ENCODE measurements at regions of chr5 and their contacts with region 1.

Region 1: DNA sequence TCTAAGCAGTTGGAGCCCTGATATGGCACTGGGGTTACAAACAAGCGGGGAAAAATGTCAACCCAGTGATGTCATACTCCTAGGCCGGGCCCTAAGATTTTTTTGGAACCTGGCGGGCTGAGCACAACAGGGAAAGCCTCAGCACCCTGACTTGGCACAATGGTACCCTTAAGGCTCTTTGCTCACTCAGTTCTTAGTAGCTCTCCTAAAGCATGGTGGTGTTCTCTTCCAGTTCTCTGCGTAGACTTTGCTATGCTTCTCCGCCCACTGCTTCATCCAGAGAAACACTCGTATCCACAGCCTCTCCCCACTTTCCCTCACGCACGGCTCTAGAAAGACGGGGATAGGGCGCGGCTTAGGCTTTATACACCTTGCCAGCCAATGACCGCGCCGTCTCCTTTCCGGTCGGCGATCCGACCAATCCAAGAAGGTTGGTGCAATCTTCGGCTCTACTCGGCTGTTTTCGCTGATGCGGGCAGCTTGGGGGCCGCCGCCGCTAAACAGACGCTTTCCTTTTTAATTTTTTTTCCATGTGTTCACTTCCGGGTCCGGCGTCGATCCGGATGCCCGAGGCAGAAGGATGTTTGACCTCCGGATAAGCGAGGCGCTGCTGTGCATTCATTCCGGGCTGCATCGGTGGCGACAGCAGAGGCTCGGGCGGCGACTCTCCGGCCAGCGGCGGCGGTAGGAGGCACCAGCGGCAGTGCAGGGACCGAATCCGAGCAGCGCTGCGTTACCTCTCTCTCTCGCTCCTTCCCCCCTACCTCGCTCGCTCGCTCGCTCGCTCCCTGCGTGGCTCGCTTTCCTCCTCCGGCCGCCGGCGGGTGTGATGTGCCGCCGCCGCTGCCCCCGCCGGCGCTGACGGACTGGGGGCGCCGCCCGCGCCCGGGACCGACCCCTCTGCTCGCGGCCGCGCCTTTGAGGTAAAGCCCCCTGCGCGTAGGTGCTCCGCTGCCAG is at the start of gene CSNK1G3:
- DNase-seq: peak; percentile 77 to 97 (median 85)
- ATAC-seq: peak; percentile 85
- H3K4me3 ChIP-seq: peak within 1 kb of the TSS; percentile 83
- H3K4me3 Mint-ChIP-seq: peak within 1 kb of the TSS; percentile 96
- H3K27ac ChIP-seq: peak within 1 kb of the TSS; percentile 63 to 66
- H3K27ac Mint-ChIP-seq: peak within 1 kb of the TSS; percentile 95
- H3K4me1 ChIP-seq: peaks cover 10% of the 10 kb centered on the region
- H3K4me1 Mint-ChIP-seq: peaks cover 45% of the 10 kb centered on the region
- H3K27me3 ChIP-seq: no peaks in the 10 kb centered on the region
- H3K27me3 Mint-ChIP-seq: no peaks in the 10 kb centered on the region
- CTCF ChIP-seq: no peak
- total RNA-seq, gene CSNK1G3: 87.2 to 92.3 TPM

Region 2: GRCh38 chr5:122366501-122366900 is 1145.4 kb before region 1 on chr5:
- CTCF ChIA-PET with region 1: no interaction called
- POLR2A ChIA-PET with region 1: no interaction called
- intact Hi-C with region 1: no loop called
- DNase-seq: no peak
- ATAC-seq: no peak
- H3K4me3 ChIP-seq: no peak overlapping the region
- H3K4me3 Mint-ChIP-seq: no peak overlapping the region
- H3K27ac ChIP-seq: no peak overlapping the region
- H3K27ac Mint-ChIP-seq: no peak overlapping the region
- H3K4me1 ChIP-seq: no peaks in the 10 kb centered on the region
- H3K4me1 Mint-ChIP-seq: no peaks in the 10 kb centered on the region
- H3K27me3 ChIP-seq: no peaks in the 10 kb centered on the region
- H3K27me3 Mint-ChIP-seq: peaks cover 10% of the 10 kb centered on the region
- CTCF ChIP-seq: no peak

Region 3: DNA sequence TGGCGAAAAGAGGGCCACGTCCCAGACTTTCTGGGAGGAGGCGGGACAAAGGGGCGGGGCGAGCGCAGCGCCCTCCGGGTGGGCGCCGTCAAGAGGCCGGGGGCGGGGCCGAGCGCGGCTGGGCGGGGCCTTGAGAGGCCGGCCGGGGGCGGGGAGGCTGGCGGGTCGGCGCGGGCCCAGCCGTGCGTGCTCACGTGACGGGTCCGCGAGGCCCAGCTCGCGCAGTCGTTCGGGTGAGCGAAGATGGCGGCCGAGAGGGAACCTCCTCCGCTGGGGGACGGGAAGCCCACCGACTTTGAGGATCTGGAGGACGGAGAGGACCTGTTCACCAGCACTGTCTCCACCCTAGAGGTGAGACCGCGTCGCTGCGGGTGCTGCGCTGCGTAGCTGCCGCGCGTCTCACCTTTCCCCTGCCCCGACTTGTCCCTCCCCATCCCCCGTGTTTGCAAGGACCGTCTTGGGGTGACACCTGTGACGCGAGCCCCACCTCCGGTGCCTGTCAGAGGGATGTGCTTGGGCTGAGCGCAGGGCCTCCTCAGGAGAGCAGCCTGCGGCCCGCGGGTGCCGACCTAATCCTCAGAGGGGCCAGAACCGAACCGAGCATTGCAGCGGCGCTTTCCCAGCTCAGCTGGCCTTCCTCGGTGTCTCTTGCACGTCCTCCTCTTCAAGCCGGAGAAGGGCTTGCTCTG is 736.9 kb before region 1 on chr5 and contains the start of gene SNX2:
- CTCF ChIA-PET with region 1: no interaction called
- POLR2A ChIA-PET with region 1: interaction called, 3 read pairs
- intact Hi-C with region 1: loop called in 1 of 2 experiments (anchors 5 kb)
- DNase-seq: peak; percentile 73 to 94 (median 84)
- ATAC-seq: peak; percentile 84
- H3K4me3 ChIP-seq: peak within 1 kb of the TSS; percentile 93
- H3K4me3 Mint-ChIP-seq: peak within 1 kb of the TSS; percentile 96
- H3K27ac ChIP-seq: peak within 1 kb of the TSS; percentile 78 to 84
- H3K27ac Mint-ChIP-seq: peak within 1 kb of the TSS; percentile 95
- H3K4me1 ChIP-seq: peaks cover 7% of the 10 kb centered on the region
- H3K4me1 Mint-ChIP-seq: peaks cover 61% of the 10 kb centered on the region
- H3K27me3 ChIP-seq: no peaks in the 10 kb centered on the region
- H3K27me3 Mint-ChIP-seq: no peaks in the 10 kb centered on the region
- CTCF ChIP-seq: peak; percentile 14
- total RNA-seq, gene SNX2: 46.0 to 46.5 TPM

Region 4: GRCh38 chr5:123549256-123549904 is 37.5 kb after region 1 on chr5:
- CTCF ChIA-PET with region 1: no interaction called
- POLR2A ChIA-PET with region 1: interaction called, 5 read pairs
- intact Hi-C with region 1: loop called in 1 of 2 experiments (anchors 1 kb)
- DNase-seq: peak; percentile 16 to 90 (median 36)
- ATAC-seq: peak; percentile 93
- H3K4me3 ChIP-seq: no peak overlapping the region
- H3K4me3 Mint-ChIP-seq: peak overlapping the region; percentile 1
- H3K27ac ChIP-seq: peak overlapping the region; percentile 6 to 78
- H3K27ac Mint-ChIP-seq: peak overlapping the region; percentile 64
- H3K4me1 ChIP-seq: peaks cover 12% of the 10 kb centered on the region
- H3K4me1 Mint-ChIP-seq: peaks cover 40% of the 10 kb centered on the region
- H3K27me3 ChIP-seq: no peaks in the 10 kb centered on the region
- H3K27me3 Mint-ChIP-seq: no peaks in the 10 kb centered on the region
- CTCF ChIP-seq: no peak

Region 5: DNA sequence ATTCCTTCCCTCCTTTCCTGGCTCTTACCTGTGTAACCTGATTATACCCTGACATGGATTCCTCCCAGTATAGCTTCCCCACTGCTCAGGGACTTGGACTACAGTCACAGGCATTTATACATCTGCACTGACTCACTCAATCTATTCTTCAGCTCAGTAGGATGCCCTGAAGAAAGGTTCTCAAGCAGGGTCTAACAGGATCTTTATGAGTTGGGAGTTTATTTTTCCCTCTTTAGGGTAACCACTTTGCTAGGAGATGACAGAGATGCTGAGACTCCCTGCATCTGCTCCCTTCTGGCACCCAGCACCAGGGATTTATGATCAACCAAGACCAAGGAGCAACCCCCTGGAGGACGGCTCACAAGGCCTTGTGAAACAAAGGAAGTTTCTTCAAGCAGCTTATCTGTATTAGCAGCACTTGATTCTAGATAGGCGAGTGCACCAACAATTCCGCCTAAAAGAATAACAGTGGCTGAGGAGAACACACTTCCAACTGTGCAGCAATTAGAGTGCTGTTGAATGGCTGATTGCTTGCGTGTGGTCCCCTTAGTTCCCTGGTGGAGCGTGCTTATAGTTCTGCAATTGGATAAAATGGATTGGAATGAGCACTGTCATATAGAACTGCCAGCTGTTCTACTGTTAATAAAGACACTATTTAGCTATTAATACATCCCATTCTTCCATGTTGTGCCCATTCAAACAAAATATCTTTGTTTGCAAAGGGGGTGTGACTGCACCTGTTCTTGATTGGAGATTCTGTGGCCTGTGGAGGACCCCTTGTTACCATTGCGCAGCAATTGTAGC is 752.0 kb after region 1 on chr5:
- CTCF ChIA-PET with region 1: no interaction called
- POLR2A ChIA-PET with region 1: no interaction called
- intact Hi-C with region 1: no loop called
- DNase-seq: no peak
- ATAC-seq: no peak
- H3K4me3 ChIP-seq: no peak overlapping the region
- H3K4me3 Mint-ChIP-seq: no peak overlapping the region
- H3K27ac ChIP-seq: no peak overlapping the region
- H3K27ac Mint-ChIP-seq: no peak overlapping the region
- H3K4me1 ChIP-seq: no peaks in the 10 kb centered on the region
- H3K4me1 Mint-ChIP-seq: no peaks in the 10 kb centered on the region
- H3K27me3 ChIP-seq: no peaks in the 10 kb centered on the region
- H3K27me3 Mint-ChIP-seq: no peaks in the 10 kb centered on the region
- CTCF ChIP-seq: no peak

Measured in CD4-positive, alpha-beta T cell (primary cell).